Common myeloid progenitor, CD34-positive (primary cell): ENCODE measurements at regions of chr7 and their contacts with region 1.

Region 1: DNA sequence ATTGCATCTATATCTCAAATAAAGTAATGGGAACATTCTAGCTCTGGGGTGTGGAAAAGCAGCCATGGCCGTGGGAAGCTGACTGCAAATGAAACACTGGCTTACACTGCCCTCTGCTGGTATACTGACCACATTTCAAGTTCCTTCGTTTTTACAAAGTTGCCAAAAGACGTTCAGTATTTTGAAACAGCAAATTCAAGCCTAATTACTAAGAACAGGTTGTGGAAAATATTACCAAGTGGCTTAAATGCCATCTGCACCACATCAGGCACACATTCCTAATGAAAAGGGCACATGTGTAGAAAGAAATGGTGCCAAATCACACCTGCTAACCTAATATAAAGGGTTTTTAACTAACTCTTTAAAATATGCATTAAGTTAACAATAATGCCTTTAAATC is 83.9 kb downstream of the JAZF1 start:
- DNase-seq: peak; percentile 62 to 74 (median 64)
- H3K4me3 ChIP-seq: no peak overlapping the region
- H3K27ac ChIP-seq: no peak overlapping the region
- H3K4me1 ChIP-seq: no peaks in the 10 kb centered on the region
- H3K27me3 ChIP-seq: peaks cover 0 to 2% (median 0%) of the 10 kb centered on the region in 5 experiments

Region 2: DNA sequence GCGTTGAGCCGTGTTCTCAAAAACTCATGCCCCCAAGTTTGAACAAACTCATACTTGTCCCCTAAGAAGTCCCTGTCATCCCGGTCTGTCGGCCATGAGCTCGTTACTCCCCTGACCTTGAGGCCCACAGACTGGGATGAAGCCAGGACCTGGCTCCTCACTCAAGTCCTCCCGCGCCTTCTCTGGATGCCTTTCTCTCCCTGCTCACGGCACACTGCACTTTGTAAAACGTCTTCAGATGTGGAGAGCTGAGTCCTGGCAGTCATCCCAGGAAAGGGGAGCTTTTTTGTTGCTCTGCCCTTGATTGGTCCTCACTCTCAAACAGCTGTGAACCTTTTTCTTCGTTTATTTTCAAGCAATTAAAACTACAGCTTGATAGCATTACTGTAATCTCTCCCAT is 26.9 kb before region 1 on chr7:
- CTCF ChIA-PET with region 1: interaction called, 17 read pairs
- POLR2A ChIA-PET with region 1: interaction called, 3 read pairs
- DNase-seq: no peak
- H3K4me3 ChIP-seq: no peak overlapping the region
- H3K27ac ChIP-seq: no peak overlapping the region
- H3K4me1 ChIP-seq: no peaks in the 10 kb centered on the region
- H3K27me3 ChIP-seq: peaks cover 0 to 4% (median 0%) of the 10 kb centered on the region in 5 experiments

Region 3: GRCh38 chr7:28078036-28078901 is 18.4 kb before region 1 on chr7:
- CTCF ChIA-PET with region 1: interaction called, 46 read pairs
- POLR2A ChIA-PET with region 1: no interaction called
- DNase-seq: peak; percentile 40 to 71 (median 71)
- H3K4me3 ChIP-seq: no peak overlapping the region
- H3K27ac ChIP-seq: no peak overlapping the region
- H3K4me1 ChIP-seq: peaks cover 0 to 12% (median 6%) of the 10 kb centered on the region in 4 experiments
- H3K27me3 ChIP-seq: no peaks in the 10 kb centered on the region

Region 4: DNA sequence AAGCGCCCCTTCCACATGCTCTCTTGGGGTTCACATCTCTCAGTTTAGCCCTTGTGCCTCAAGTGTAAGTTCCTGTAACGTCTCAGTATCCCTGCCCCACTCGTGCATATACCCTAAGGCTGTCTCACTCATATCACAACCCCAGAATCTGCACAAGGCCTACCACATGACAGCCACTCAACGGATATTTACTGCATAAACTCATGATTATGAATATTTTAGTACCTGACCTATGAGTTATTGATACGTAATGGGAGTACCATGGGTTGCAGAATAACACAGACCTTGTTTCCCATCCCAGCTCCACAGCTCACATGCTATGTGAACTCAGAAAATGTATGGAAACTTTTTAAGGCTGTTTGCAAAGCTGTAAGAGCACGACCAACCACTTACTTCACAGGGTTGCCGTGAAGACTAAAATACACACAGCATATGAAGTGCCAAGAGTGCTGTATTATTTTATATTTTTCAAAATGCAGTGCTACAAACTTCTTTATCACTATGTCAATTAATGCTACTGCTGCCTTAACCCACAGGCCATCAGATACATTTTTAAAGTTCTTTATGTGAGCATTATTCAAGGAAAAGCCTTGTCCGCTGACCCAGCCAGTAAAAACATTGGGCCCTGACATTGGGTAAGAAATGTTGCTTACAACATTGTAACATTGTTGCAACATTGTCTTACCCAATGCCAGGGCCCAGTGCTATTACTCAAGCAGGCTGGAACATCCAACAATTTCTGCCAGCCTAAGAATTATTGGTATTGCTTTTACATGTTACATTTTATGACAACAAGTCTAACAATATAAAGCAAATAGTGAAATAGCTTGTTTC is 13.3 kb before region 1 on chr7:
- CTCF ChIA-PET with region 1: interaction called, 46 read pairs
- POLR2A ChIA-PET with region 1: no interaction called
- DNase-seq: no peak
- H3K4me3 ChIP-seq: no peak overlapping the region
- H3K27ac ChIP-seq: no peak overlapping the region
- H3K4me1 ChIP-seq: peaks cover 4 to 14% (median 10%) of the 10 kb centered on the region in 4 experiments
- H3K27me3 ChIP-seq: peaks cover 0 to 4% (median 0%) of the 10 kb centered on the region in 5 experiments